ENCODE measurements at regions of chr11 and their contacts with region 1.

Region 1: DNA sequence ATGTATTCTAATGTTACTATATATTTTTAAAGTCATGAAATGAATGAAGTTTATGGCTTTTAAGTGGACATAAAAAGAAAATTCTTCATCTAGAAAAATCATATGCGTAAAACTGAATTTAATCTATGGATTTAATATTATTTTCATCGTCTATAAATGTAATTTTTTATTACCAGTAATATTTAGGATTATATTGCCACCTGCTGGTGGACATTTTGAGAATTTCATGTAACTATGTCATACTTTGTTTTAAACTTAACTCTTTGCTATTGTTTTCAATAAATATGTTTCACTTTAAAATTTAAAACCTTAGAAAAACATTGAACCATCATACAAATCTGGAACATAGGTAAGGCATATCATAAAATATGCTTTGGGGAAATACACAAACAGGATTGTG is 66.5 kb upstream of the CEP126 start:
- DNase-seq: no peak
- ATAC-seq: no peak
- H3K4me3 ChIP-seq: no peak overlapping the region
- H3K27ac ChIP-seq: no peak overlapping the region
- H3K4me1 ChIP-seq: no peaks in the 10 kb centered on the region
- H3K27me3 ChIP-seq: no peaks in the 10 kb centered on the region
- CTCF ChIP-seq: peak; percentile 21 to 63 (median 36)
- POLR2A ChIP-seq: no peak

Region 2: GRCh38 chr11:100980156-100980555 is 868.1 kb before region 1 on chr11:
- intact Hi-C with region 1: loop called in 2 of 10 experiments (anchors 10 kb)
- DNase-seq: no peak
- ATAC-seq: no peak
- H3K4me3 ChIP-seq: no peak overlapping the region
- H3K27ac ChIP-seq: no peak overlapping the region
- H3K4me1 ChIP-seq: no peaks in the 10 kb centered on the region
- H3K27me3 ChIP-seq: no peaks in the 10 kb centered on the region
- CTCF ChIP-seq: peak in 11 of 12 donors; percentile 18 to 67 (median 49)
- POLR2A ChIP-seq: no peak

Region 3: GRCh38 chr11:101390539-101390938 is 457.7 kb before region 1 on chr11:
- intact Hi-C with region 1: loop called in 1 of 10 experiments (anchors 10 kb)
- DNase-seq: no peak
- ATAC-seq: no peak
- H3K4me3 ChIP-seq: no peak overlapping the region
- H3K27ac ChIP-seq: no peak overlapping the region
- H3K4me1 ChIP-seq: no peaks in the 10 kb centered on the region
- H3K27me3 ChIP-seq: no peaks in the 10 kb centered on the region
- CTCF ChIP-seq: peak in 8 of 12 donors; percentile 12 to 40 (median 28)
- POLR2A ChIP-seq: no peak

Region 4: DNA sequence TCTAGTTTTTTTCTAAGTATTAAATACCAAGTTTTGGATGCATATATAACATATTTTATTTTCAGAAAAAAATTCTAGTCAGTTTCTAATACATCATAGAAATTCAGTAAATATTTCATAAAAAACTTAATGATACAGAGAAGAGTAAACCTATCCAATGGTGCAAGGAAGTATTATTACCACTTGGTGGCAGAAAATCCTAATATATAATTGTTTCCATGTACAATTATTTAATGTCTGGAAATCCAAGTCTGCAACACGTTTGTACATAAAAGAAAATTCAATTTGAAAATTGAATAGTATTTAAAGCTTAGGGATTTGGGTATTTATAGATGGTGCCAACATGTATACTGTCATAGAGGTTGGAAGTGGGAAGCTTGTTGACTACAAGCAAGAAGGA is 391.4 kb before region 1 on chr11:
- intact Hi-C with region 1: loop called (anchors 2 to 10 kb)
- DNase-seq: no peak
- ATAC-seq: no peak
- H3K4me3 ChIP-seq: no peak overlapping the region
- H3K27ac ChIP-seq: no peak overlapping the region
- H3K4me1 ChIP-seq: no peaks in the 10 kb centered on the region
- H3K27me3 ChIP-seq: no peaks in the 10 kb centered on the region
- CTCF ChIP-seq: peak in 11 of 12 donors; percentile 18 to 58 (median 45)
- POLR2A ChIP-seq: no peak

Measured in heart left ventricle (tissue), 16 donors.